HepG2 (cell line): ENCODE measurements at regions of chr7 and their contacts with region 1.

Region 1: GRCh38 chr7:74068393-74069085 is 15.1 kb upstream of the LIMK1 start:
- DNase-seq: no peak
- ATAC-seq: no peak
- H3K4me3 ChIP-seq: no peak overlapping the region
- H3K27ac ChIP-seq: no peak overlapping the region
- H3K4me1 ChIP-seq: peaks cover 3% of the 10 kb centered on the region; the same call in 1 of the 2 replicates
- H3K27me3 ChIP-seq: peaks cover 2 to 10% of the 10 kb centered on the region in 2 experiments; a peak in 4 of 5 replicates
- CTCF ChIP-seq: no peak
- EP300 ChIP-seq: no peak
- POLR2A ChIP-seq: no peak
- RAD21 ChIP-seq: no peak

Region 2: GRCh38 chr7:74051629-74052410 is 16.7 kb before region 1 on chr7:
- CTCF ChIA-PET with region 1: no interaction called
- POLR2A ChIA-PET with region 1: no interaction called
- in situ Hi-C with region 1: no loop called
- intact Hi-C with region 1: no loop called
- DNase-seq: peak; percentile 56
- ATAC-seq: peak; percentile 91
- H3K4me3 ChIP-seq: no peak overlapping the region
- H3K27ac ChIP-seq: no peak overlapping the region
- H3K4me1 ChIP-seq: peaks cover 14% of the 10 kb centered on the region; the same call in 1 of the 2 replicates
- H3K27me3 ChIP-seq: peaks cover 2 to 4% of the 10 kb centered on the region in 2 experiments; a peak in 2 of 5 replicates
- CTCF ChIP-seq: peak; percentile 84
- EP300 ChIP-seq: no peak
- POLR2A ChIP-seq: no peak
- RAD21 ChIP-seq: peak; percentile 73

Region 3: GRCh38 chr7:74094224-74095101 is 25.9 kb after region 1 on chr7:
- CTCF ChIA-PET with region 1: no interaction called
- POLR2A ChIA-PET with region 1: no interaction called
- in situ Hi-C with region 1: no loop called
- intact Hi-C with region 1: no loop called
- DNase-seq: no peak
- ATAC-seq: no peak
- H3K4me3 ChIP-seq: no peak overlapping the region
- H3K27ac ChIP-seq: no peak overlapping the region
- H3K4me1 ChIP-seq: no peaks in the 10 kb centered on the region
- H3K27me3 ChIP-seq: no peaks in the 10 kb centered on the region
- CTCF ChIP-seq: no peak
- EP300 ChIP-seq: no peak
- POLR2A ChIP-seq: no peak
- RAD21 ChIP-seq: no peak

Region 4: DNA sequence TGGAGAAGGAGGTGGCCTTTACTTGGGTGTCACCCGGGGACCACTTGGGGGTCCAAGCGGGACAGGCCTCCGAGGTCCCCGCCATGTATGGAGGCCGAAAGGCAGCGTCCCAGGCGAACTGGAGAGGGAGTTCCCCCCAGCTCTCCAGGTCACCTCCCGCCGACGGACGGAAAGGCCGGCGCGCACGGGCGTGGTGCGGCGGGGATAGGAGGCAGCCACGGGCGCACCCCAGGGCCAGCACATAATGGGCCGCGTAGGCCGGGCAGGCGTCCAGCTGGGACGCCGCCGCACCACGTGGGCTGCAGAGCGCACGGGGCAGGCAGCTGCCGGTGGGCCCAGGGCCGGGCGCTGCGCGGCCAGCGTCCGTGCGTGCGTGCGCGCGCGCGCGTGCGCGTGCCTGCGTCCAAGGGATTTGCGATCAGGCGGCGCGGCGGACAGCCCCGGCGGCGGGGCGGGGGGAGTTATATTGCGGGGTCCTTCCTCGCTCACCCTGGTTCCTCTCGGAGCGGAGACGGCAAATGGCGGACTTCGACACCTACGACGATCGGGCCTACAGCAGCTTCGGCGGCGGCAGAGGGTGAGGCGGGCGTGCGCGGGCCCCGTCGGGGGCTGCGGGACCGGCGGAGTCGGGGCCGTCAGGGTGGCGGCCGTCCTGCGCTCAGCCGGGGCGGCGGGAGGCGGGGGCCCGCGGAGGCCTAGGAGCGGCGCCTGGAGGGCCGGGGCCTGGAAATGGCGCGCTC is 105.5 kb after region 1 on chr7 and contains the start of gene EIF4H:
- CTCF ChIA-PET with region 1: no interaction called
- POLR2A ChIA-PET with region 1: no interaction called
- in situ Hi-C with region 1: loop called (anchors 5 kb)
- intact Hi-C with region 1: no loop called
- DNase-seq: peak; percentile 78
- ATAC-seq: peak; percentile 97
- H3K4me3 ChIP-seq: peak within 1 kb of the TSS; percentile 94 to 98 (median 97)
- H3K27ac ChIP-seq: peak within 1 kb of the TSS; percentile 80
- H3K4me1 ChIP-seq: peaks cover 56% of the 10 kb centered on the region
- H3K27me3 ChIP-seq: no peaks in the 10 kb centered on the region; a peak in 1 of 5 replicates
- CTCF ChIP-seq: no peak
- EP300 ChIP-seq: no peak
- POLR2A ChIP-seq: peak; percentile 79 to 80
- RAD21 ChIP-seq: peak; percentile 46; the same call in 1 of the 2 replicates
- total RNA-seq, gene EIF4H: 321 and 356 TPM in 2 replicates

Region 5: GRCh38 chr7:74183613-74184450 is 115.3 kb after region 1 on chr7:
- CTCF ChIA-PET with region 1: interaction called, 10 read pairs
- POLR2A ChIA-PET with region 1: no interaction called
- in situ Hi-C with region 1: no loop called
- intact Hi-C with region 1: loop called (anchors 1 kb)
- DNase-seq: peak; percentile 54
- ATAC-seq: peak; percentile 77
- H3K4me3 ChIP-seq: no peak overlapping the region
- H3K27ac ChIP-seq: no peak overlapping the region
- H3K4me1 ChIP-seq: peaks cover 35% of the 10 kb centered on the region
- H3K27me3 ChIP-seq: no peaks in the 10 kb centered on the region
- CTCF ChIP-seq: peak; percentile 54
- EP300 ChIP-seq: no peak
- POLR2A ChIP-seq: peak in 1 of 2 experiments; percentile 19; a peak in 1 of 4 replicates
- RAD21 ChIP-seq: peak; percentile 21; the same call in 1 of the 2 replicates